Dorsolateral prefrontal cortex (tissue), 120 donors: ENCODE measurements at regions of chr12 and their contacts with region 1.

Region 1: DNA sequence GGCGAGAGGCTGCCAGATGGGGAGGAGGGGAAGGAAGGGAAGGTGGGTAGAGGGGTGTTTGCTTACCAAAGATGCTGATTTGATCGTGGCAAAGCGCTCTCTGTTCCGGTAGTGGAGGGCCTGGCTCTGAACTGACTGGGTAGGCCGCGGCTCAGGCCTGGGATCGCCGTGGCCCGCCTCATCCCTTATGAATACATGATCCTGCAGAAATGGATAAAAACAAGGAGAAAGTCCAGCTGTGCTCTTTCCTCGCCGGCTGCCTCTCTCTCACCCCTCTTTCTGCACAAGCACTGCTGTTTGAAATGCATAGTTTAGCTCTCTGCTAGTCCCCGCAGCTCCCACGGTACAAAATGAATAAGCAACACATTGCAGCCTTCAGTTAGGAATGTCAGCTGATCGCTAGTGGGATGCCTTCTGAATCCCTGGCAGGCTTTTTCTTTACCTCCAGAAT is 53.8 kb downstream of the PEBP1 start:
- DNase-seq: peak; percentile 53 to 70 (median 63)
- H3K4me3 ChIP-seq: peak overlapping the region; percentile 41 to 75 (median 64)
- H3K27ac ChIP-seq: peak overlapping the region; percentile 82 to 100 (median 97)
- H3K27me3 ChIP-seq: no peaks in the 10 kb centered on the region
- CTCF ChIP-seq: peak in 2 of 56 donors; percentile 14 to 31

Region 2: GRCh38 chr12:117334855-117335587 is 854.7 kb before region 1 on chr12:
- intact Hi-C with region 1: no loop called
- DNase-seq: peak in 1 of 10 donors; percentile 12
- H3K4me3 ChIP-seq: peak overlapping the region in 4 of 59 donors; percentile 4 to 30 (median 18)
- H3K27ac ChIP-seq: no peak overlapping the region
- H3K27me3 ChIP-seq: peaks cover 0 to 42% (median 9%) of the 10 kb centered on the region in 45 donors
- CTCF ChIP-seq: no peak

Region 3: DNA sequence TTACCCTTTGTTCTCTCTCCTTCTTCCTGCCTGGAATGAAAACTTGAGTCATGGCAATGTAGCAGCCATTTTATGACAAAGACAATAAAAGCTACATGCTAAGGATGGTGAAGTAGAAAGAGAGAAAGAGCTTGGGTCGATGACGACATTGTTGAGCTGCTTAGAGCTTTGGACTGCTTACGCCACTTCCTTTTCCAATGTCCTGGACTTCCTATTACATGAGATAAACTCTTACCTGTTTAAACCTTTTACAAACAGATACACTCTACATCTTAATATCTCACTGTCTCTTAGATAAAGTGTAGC is 16.3 kb after region 1 on chr12:
- intact Hi-C with region 1: no loop called
- DNase-seq: no peak
- H3K4me3 ChIP-seq: no peak overlapping the region
- H3K27ac ChIP-seq: no peak overlapping the region
- H3K27me3 ChIP-seq: no peaks in the 10 kb centered on the region
- CTCF ChIP-seq: no peak

Region 4: GRCh38 chr12:118307069-118307954 is 117.5 kb after region 1 on chr12:
- intact Hi-C with region 1: loop called in 1 of 2 experiments (anchors 10 kb)
- DNase-seq: no peak
- H3K4me3 ChIP-seq: peak overlapping the region in 2 of 59 donors; percentile 10 to 12
- H3K27ac ChIP-seq: peak overlapping the region in 7 of 59 donors; percentile 2 to 45 (median 16)
- H3K27me3 ChIP-seq: no peaks in the 10 kb centered on the region
- CTCF ChIP-seq: no peak

Region 5: DNA sequence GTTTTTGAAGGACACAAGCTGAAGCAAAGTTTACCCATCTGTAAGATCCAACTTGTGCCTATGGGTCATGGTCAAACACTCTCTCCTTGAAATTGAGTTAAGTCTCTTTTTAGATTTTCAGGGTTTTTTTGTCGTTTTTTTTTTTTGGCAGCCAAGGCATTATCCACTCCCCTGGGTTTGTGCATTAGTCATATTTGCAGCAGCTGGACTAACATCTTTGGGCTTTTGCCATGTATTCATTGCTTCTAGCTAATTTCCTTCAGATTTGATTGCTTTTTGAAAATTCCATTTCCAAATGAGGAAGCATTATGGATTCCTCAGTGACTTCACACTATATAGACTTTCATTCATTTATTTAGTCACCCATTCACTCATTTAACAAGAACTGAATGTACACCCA is 711.2 kb after region 1 on chr12:
- intact Hi-C with region 1: no loop called
- DNase-seq: no peak
- H3K4me3 ChIP-seq: no peak overlapping the region
- H3K27ac ChIP-seq: no peak overlapping the region
- H3K27me3 ChIP-seq: no peaks in the 10 kb centered on the region
- CTCF ChIP-seq: no peak